IMR-90 (cell line): ENCODE measurements at regions of chr10 and their contacts with region 1.

Region 1: GRCh38 chr10:12195603-12196506 is at the starts of genes CDC123 and NUDT5:
- DNase-seq: peak; percentile 88
- ATAC-seq: peak; percentile 93
- H3K4me3 ChIP-seq: peak within 1 kb of the TSS; percentile 86
- H3K27ac ChIP-seq: peak within 1 kb of the TSS; percentile 91
- H3K4me1 ChIP-seq: peaks cover 7% of the 10 kb centered on the region; the same call in 1 of the 2 replicates
- H3K27me3 ChIP-seq: no peaks in the 10 kb centered on the region
- CTCF ChIP-seq: no peak
- POLR2A ChIP-seq: no peak
- RAD21 ChIP-seq: peak; percentile 14; the same call in 1 of the 2 replicates
- total RNA-seq, gene CDC123: 171 and 203 TPM in 2 replicates
- total RNA-seq, gene NUDT5: 70.1 and 74.2 TPM in 2 replicates

Region 2: GRCh38 chr10:11286261-11286852 is 909.5 kb before region 1 on chr10:
- CTCF ChIA-PET with region 1: no interaction called
- POLR2A ChIA-PET with region 1: no interaction called
- dilution Hi-C with region 1: no loop called
- in situ Hi-C with region 1: no loop called
- intact Hi-C with region 1: no loop called
- DNase-seq: no peak
- ATAC-seq: no peak
- H3K4me3 ChIP-seq: no peak overlapping the region
- H3K27ac ChIP-seq: no peak overlapping the region
- H3K4me1 ChIP-seq: no peaks in the 10 kb centered on the region
- H3K27me3 ChIP-seq: no peaks in the 10 kb centered on the region
- CTCF ChIP-seq: no peak
- POLR2A ChIP-seq: no peak
- RAD21 ChIP-seq: no peak

Region 3: GRCh38 chr10:12214763-12215218 is 18.9 kb after region 1 on chr10:
- CTCF ChIA-PET with region 1: interaction called, 5 read pairs
- POLR2A ChIA-PET with region 1: interaction called, 10 read pairs
- dilution Hi-C with region 1: no loop called
- in situ Hi-C with region 1: no loop called
- intact Hi-C with region 1: no loop called
- DNase-seq: peak; percentile 64
- ATAC-seq: peak; percentile 73
- H3K4me3 ChIP-seq: no peak overlapping the region
- H3K27ac ChIP-seq: peak overlapping the region; percentile 29; the same call in 1 of the 2 replicates
- H3K4me1 ChIP-seq: peaks cover 5% of the 10 kb centered on the region
- H3K27me3 ChIP-seq: no peaks in the 10 kb centered on the region
- CTCF ChIP-seq: peak; percentile 73
- POLR2A ChIP-seq: no peak
- RAD21 ChIP-seq: peak; percentile 66

Region 4: GRCh38 chr10:12235796-12236195 is 39.9 kb after region 1 on chr10:
- CTCF ChIA-PET with region 1: no interaction called
- POLR2A ChIA-PET with region 1: no interaction called
- dilution Hi-C with region 1: no loop called
- in situ Hi-C with region 1: no loop called
- intact Hi-C with region 1: no loop called
- DNase-seq: peak; percentile 63
- ATAC-seq: peak; percentile 81
- H3K4me3 ChIP-seq: no peak overlapping the region
- H3K27ac ChIP-seq: peak overlapping the region; percentile 26; the same call in 1 of the 2 replicates
- H3K4me1 ChIP-seq: peaks cover 8% of the 10 kb centered on the region
- H3K27me3 ChIP-seq: no peaks in the 10 kb centered on the region
- CTCF ChIP-seq: no peak
- POLR2A ChIP-seq: no peak
- RAD21 ChIP-seq: no peak

Region 5: DNA sequence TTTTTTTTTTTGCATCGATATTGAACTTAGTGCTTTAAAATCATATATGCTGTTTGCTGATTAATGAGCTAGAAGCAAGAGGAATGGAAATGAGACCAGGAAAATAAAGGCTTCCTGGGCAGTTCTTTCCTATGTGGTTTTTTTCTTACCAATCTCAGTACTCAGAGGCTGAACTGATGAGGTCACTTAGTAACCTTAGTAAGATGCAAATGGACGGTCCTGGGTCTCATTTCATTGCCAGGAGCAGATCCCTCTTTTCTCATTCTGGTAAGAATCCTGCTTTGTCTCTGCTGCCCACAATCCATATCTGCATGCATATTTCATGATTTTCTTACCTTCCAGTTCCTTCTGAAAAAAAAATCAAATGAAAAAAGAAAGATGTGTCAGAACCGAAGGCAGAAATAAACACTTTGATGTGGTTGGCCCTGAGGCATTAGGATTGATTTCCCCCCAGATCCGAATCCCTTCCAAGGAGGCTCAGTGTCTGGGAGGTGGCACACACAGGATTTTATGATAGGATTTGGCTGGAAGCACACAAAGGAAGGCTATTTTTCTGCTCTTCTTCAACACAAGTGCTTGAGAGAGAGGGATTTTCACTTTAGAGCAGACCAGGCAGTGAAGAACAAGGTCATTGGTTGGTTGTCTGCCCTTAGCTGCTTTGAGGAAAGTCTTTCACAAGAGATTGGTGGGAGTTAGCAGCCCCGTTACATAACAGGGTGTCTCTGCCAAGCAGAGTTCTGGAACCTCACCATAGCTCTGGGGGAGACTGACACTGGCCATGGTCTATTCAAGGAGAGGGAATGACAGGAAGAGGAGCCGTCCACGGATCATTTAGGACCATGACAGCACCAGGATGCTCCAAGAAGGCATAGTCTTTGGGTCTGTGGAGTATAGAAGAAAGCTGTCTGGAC is 303.5 kb after region 1 on chr10:
- CTCF ChIA-PET with region 1: no interaction called
- POLR2A ChIA-PET with region 1: interaction called, 10 read pairs
- dilution Hi-C with region 1: no loop called
- in situ Hi-C with region 1: no loop called
- intact Hi-C with region 1: no loop called
- DNase-seq: peak; percentile 20
- ATAC-seq: peak; percentile 21; the same call in 1 of the 2 replicates
- H3K4me3 ChIP-seq: no peak overlapping the region
- H3K27ac ChIP-seq: no peak overlapping the region
- H3K4me1 ChIP-seq: peaks cover 5% of the 10 kb centered on the region; the same call in 1 of the 2 replicates
- H3K27me3 ChIP-seq: no peaks in the 10 kb centered on the region; the same call in 1 of the 2 replicates
- CTCF ChIP-seq: no peak
- POLR2A ChIP-seq: no peak
- RAD21 ChIP-seq: no peak

Region 6: GRCh38 chr10:13074561-13075451 is 879.0 kb after region 1 on chr10:
- CTCF ChIA-PET with region 1: interaction called, 3 read pairs
- POLR2A ChIA-PET with region 1: no interaction called
- dilution Hi-C with region 1: no loop called
- in situ Hi-C with region 1: no loop called
- intact Hi-C with region 1: loop called (anchors 5 kb)
- DNase-seq: peak; percentile 60
- ATAC-seq: peak; percentile 95
- H3K4me3 ChIP-seq: no peak overlapping the region
- H3K27ac ChIP-seq: no peak overlapping the region
- H3K4me1 ChIP-seq: no peaks in the 10 kb centered on the region
- H3K27me3 ChIP-seq: 0 out of 2 replicates have a peak, but pooled peaks cover 2% of the 10 kb centered on the region
- CTCF ChIP-seq: peak; percentile 87
- POLR2A ChIP-seq: no peak
- RAD21 ChIP-seq: peak; percentile 94